ENCODE measurements at regions of chr1 and their contacts with region 1.

Region 1: GRCh38 chr1:228165372-228166169 is at the start of gene IBA57:
- DNase-seq: peak; percentile 89
- H3K4me3 ChIP-seq: peak within 1 kb of the TSS; percentile 73
- H3K27me3 ChIP-seq: no peaks in the 10 kb centered on the region
- CTCF ChIP-seq: peak; percentile 88
- polyA plus RNA-seq, gene IBA57: 1.2 and 2.8 TPM in 2 replicates

Region 2: GRCh38 chr1:228131766-228132165 is 33.8 kb before region 1 on chr1:
- CTCF ChIA-PET with region 1: interaction called, 27 read pairs
- POLR2A ChIA-PET with region 1: no interaction called
- DNase-seq: no peak
- H3K4me3 ChIP-seq: no peak overlapping the region
- H3K27me3 ChIP-seq: peaks cover 12% of the 10 kb centered on the region
- CTCF ChIP-seq: no peak

Region 3: GRCh38 chr1:228142155-228142691 is 23.3 kb before region 1 on chr1:
- CTCF ChIA-PET with region 1: interaction called, 8 read pairs
- POLR2A ChIA-PET with region 1: interaction called, 14 read pairs
- DNase-seq: no peak
- H3K4me3 ChIP-seq: peak overlapping the region; percentile 9
- H3K27me3 ChIP-seq: no peaks in the 10 kb centered on the region
- CTCF ChIP-seq: no peak

Region 4: DNA sequence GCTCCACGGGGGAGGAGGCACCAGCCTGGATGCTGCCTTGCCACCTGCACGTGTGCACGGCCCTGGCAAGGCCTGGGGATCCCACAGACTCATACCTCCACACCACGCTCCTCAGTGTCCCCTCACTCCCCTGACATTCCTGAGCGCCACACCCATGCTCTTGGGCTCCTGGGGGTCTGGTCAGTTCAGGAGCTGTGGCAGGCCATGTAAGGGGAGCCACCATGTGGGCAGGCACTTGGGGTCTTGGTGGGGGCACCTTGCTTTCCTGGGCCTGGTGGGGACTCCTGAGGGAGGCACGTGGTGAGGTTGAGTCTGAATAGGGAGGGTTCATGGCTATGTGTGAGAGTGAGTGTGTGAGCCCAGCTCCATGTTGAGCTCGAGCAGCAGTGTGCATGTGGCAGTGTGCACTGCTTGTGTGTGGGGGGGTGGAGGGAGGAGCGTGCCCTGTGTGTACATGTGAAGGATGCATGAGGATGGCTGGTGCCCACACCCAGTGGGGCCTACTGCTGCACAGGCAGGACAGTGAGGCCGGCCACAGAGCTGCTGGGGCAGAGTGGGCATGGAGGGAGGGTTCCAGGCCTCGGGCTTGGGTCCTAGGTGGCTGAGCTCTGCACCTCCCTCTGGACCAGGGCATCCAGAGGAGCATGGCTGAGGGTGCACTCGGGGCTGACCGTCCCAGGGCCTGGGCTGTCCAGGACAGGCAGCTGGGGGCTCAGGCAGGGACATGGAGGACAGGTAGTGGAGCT is 14.2 kb before region 1 on chr1:
- CTCF ChIA-PET with region 1: interaction called, 12 read pairs
- POLR2A ChIA-PET with region 1: no interaction called
- DNase-seq: no peak
- H3K4me3 ChIP-seq: no peak overlapping the region
- H3K27me3 ChIP-seq: no peaks in the 10 kb centered on the region
- CTCF ChIP-seq: no peak

Measured in BJ (cell line).